ENCODE measurements at regions of chr7 and their contacts with region 1.

Region 1: GRCh38 chr7:140175221-140176121 is 1.3 kb downstream of the KDM7A start:
- DNase-seq: peak; percentile 75 to 96 (median 88)
- ATAC-seq: peak; percentile 62 to 73 (median 67)
- H3K4me3 ChIP-seq: peak overlapping the region; percentile 46 to 75
- H3K4me3 Mint-ChIP-seq: peak overlapping the region; percentile 84 to 98 (median 88)
- H3K27ac ChIP-seq: peak overlapping the region; percentile 36
- H3K27ac Mint-ChIP-seq: peak overlapping the region; percentile 93 to 94
- H3K4me1 ChIP-seq: peaks cover 24 to 28% of the 10 kb centered on the region in 2 experiments
- H3K4me1 Mint-ChIP-seq: peaks cover 50 to 56% (median 55%) of the 10 kb centered on the region in 3 donors
- H3K27me3 ChIP-seq: no peaks in the 10 kb centered on the region
- H3K27me3 Mint-ChIP-seq: no peaks in the 10 kb centered on the region

Region 2: DNA sequence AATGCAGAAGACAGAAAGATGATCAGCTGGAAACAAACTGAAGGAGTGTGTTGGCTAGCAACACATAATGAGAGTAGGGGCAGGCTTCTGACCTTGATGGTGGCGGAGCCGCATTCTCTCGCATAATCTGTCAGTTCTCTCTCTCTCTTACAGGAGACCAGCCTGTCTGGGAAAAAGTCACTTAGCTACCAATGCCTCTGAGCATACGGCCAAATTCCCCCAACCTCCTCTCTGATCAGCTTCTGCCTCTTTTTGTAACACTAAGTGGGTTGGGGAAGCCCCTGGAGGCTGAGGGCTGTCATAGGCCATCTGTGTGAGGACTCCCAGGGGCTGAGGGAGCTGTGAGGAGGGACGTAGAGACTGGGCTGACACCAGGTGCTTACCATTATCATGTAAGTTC is 502.2 kb before region 1 on chr7:
- CTCF ChIA-PET with region 1: no interaction called
- POLR2A ChIA-PET with region 1: no interaction called
- DNase-seq: no peak
- ATAC-seq: peak in 2 of 4 experiments; percentile 6 to 33
- H3K4me3 ChIP-seq: no peak overlapping the region
- H3K4me3 Mint-ChIP-seq: no peak overlapping the region
- H3K27ac ChIP-seq: no peak overlapping the region
- H3K27ac Mint-ChIP-seq: peak overlapping the region in 1 of 2 donors; percentile 72
- H3K4me1 ChIP-seq: peaks cover 0 to 6% of the 10 kb centered on the region in 2 experiments
- H3K4me1 Mint-ChIP-seq: peaks cover 19 to 50% (median 27%) of the 10 kb centered on the region in 3 donors
- H3K27me3 ChIP-seq: no peaks in the 10 kb centered on the region
- H3K27me3 Mint-ChIP-seq: no peaks in the 10 kb centered on the region

Region 3: DNA sequence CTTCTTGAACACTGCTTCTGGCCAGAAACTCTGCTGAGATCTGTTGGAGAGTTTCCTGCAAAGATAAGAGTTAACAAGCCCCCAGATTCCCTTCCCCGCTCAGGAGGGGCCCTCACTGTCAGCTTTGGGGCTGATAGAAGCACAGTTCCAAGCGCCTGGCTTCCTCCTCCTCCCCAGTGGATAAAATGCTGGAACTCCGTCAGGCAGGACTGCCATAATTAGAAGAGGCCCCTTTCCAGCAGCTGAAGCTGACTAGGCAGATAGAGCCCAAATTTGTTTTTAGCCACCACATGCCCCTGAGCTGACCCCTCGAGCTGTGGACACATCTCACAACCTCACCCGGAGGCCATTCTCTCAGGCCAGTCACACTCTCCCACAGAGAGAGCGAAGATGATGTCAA is 257.0 kb before region 1 on chr7:
- CTCF ChIA-PET with region 1: no interaction called
- POLR2A ChIA-PET with region 1: no interaction called
- DNase-seq: no peak
- ATAC-seq: no peak
- H3K4me3 ChIP-seq: no peak overlapping the region
- H3K4me3 Mint-ChIP-seq: no peak overlapping the region
- H3K27ac ChIP-seq: no peak overlapping the region
- H3K27ac Mint-ChIP-seq: no peak overlapping the region
- H3K4me1 ChIP-seq: peaks cover 0 to 7% of the 10 kb centered on the region in 2 experiments
- H3K4me1 Mint-ChIP-seq: peaks cover 0 to 17% (median 17%) of the 10 kb centered on the region in 3 donors
- H3K27me3 ChIP-seq: peaks cover 0 to 4% of the 10 kb centered on the region in 2 experiments
- H3K27me3 Mint-ChIP-seq: peaks cover 0 to 2% of the 10 kb centered on the region in 2 donors

Region 4: DNA sequence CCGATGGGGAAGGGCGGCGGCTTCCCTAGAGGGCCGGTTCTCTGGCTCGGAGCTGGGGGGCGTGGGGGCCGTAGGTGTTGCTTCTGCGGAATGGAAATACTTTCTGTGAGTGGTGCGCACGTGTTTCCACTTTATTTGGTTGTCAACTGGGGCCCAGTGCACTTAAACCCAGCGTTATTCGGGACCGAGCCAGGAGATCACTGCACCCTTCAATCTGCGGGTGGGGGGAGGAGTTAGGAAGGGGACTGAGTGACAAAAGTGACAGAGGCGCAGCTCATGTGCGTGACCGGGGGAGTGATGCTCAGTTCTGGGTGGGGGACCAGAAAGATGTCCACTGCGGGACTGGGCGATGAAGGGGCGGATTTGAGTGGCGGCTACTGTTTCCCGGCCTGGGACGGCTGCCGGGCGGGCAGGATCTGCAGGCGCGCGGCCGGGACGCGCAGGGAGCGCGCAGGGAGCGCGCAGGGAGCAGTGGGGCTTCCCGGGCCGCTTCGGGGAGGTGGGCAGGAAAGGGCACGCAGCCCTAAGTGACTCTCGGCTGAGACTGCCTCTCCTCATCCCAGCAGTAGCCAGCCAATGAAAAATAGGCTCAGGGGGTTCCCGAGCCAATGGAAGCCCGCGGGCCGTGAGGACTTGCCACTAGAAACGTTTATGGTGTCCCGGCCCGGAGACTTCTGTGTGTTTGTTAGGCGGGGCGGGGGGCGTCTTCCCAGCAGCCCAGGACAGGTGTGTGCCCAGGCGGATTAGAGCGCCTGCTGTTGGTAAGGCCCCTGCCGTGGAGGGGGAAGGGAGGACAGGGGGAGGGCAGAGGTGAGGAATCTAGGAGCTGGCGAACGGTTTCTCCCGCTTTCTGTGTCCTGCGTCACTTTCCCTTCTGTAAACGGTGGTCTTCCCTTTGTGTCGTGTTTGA is 55.6 kb after region 1 on chr7:
- CTCF ChIA-PET with region 1: interaction called, 3 to 17 read pairs
- POLR2A ChIA-PET with region 1: interaction called in 1 of 2 experiments, 7 read pairs
- DNase-seq: peak in 33 of 35 experiments; percentile 19 to 71 (median 42)
- ATAC-seq: peak; percentile 13 to 22 (median 16)
- H3K4me3 ChIP-seq: peak overlapping the region; percentile 52 to 79
- H3K4me3 Mint-ChIP-seq: peak overlapping the region; percentile 87 to 93 (median 91)
- H3K27ac ChIP-seq: peak overlapping the region; percentile 80
- H3K27ac Mint-ChIP-seq: peak overlapping the region; percentile 92 to 96
- H3K4me1 ChIP-seq: peaks cover 19 to 43% of the 10 kb centered on the region in 2 experiments
- H3K4me1 Mint-ChIP-seq: peaks cover 41 to 51% (median 46%) of the 10 kb centered on the region in 3 donors
- H3K27me3 ChIP-seq: no peaks in the 10 kb centered on the region
- H3K27me3 Mint-ChIP-seq: no peaks in the 10 kb centered on the region